ENCODE measurements at regions of chr3 and their contacts with region 1.

Region 1: GRCh38 chr3:51498876-51499738 is 708 bp downstream of the DCAF1 start:
- DNase-seq: peak; percentile 91
- H3K4me3 Mint-ChIP-seq: peak overlapping the region; percentile 98
- H3K27ac Mint-ChIP-seq: peak overlapping the region; percentile 98
- H3K4me1 Mint-ChIP-seq: peaks cover 21% of the 10 kb centered on the region
- H3K27me3 Mint-ChIP-seq: no peaks in the 10 kb centered on the region

Region 2: DNA sequence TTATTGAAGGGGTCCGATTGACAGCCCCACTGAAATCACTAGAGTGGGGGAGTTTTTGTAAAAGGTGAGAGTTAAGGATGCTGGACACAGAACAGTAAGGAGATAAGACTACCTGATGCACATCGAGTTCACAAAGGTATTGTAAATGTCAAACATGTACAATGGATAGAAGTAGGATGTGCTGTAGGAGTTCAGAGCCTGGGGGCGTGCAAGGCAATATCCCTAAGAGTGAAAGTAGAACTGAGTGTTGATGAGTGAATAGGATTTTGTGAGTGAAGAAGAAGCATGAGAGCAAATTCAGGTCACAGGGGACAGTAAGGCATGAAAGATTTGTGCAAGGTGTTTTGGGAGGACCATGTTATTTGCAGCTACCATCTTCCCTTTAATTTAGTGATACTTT is 802.8 kb before region 1 on chr3:
- CTCF ChIA-PET with region 1: no interaction called
- intact Hi-C with region 1: no loop called
- DNase-seq: no peak
- H3K4me3 Mint-ChIP-seq: no peak overlapping the region
- H3K27ac Mint-ChIP-seq: no peak overlapping the region
- H3K4me1 Mint-ChIP-seq: no peaks in the 10 kb centered on the region
- H3K27me3 Mint-ChIP-seq: no peaks in the 10 kb centered on the region

Region 3: DNA sequence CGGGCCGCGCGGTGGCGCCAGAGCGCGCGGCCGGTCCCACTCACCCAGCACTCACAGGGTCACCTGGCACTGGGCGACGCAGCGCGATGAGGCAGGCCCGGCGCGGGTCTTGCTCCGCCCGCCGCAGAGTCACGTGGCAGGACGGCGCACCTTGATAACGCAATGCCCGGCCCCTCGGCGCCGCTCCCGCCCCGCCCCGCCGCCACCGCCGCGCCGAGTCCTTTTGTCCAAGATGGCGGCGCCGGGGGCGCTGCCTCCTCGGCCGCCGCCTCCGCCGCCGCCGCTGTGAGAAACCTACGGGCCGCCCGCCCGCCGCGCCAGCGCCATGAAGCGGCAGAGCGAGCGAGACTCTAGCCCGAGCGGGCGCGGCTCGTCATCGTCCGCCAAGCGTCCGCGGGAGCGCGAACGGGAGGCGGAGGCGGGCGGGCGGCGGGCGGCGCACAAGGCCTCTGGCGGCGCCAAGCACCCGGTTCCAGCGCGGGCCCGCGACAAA is 108.0 kb before region 1 on chr3 and contains the start of gene RBM15B:
- CTCF ChIA-PET with region 1: interaction called, 7 read pairs
- intact Hi-C with region 1: loop called (anchors 1 kb)
- DNase-seq: peak; percentile 98
- H3K4me3 Mint-ChIP-seq: peak within 1 kb of the TSS; percentile 81
- H3K27ac Mint-ChIP-seq: peak within 1 kb of the TSS; percentile 85
- H3K4me1 Mint-ChIP-seq: peaks cover 77% of the 10 kb centered on the region
- H3K27me3 Mint-ChIP-seq: no peaks in the 10 kb centered on the region
- total RNA-seq, gene RBM15B: 12.8 to 13.5 TPM

Region 4: GRCh38 chr3:51637941-51638471 is 138.9 kb after region 1 on chr3:
- CTCF ChIA-PET with region 1: interaction called, 11 read pairs
- intact Hi-C with region 1: loop called (anchors 1 kb)
- DNase-seq: peak; percentile 50
- H3K4me3 Mint-ChIP-seq: no peak overlapping the region
- H3K27ac Mint-ChIP-seq: no peak overlapping the region
- H3K4me1 Mint-ChIP-seq: no peaks in the 10 kb centered on the region
- H3K27me3 Mint-ChIP-seq: no peaks in the 10 kb centered on the region

Region 5: DNA sequence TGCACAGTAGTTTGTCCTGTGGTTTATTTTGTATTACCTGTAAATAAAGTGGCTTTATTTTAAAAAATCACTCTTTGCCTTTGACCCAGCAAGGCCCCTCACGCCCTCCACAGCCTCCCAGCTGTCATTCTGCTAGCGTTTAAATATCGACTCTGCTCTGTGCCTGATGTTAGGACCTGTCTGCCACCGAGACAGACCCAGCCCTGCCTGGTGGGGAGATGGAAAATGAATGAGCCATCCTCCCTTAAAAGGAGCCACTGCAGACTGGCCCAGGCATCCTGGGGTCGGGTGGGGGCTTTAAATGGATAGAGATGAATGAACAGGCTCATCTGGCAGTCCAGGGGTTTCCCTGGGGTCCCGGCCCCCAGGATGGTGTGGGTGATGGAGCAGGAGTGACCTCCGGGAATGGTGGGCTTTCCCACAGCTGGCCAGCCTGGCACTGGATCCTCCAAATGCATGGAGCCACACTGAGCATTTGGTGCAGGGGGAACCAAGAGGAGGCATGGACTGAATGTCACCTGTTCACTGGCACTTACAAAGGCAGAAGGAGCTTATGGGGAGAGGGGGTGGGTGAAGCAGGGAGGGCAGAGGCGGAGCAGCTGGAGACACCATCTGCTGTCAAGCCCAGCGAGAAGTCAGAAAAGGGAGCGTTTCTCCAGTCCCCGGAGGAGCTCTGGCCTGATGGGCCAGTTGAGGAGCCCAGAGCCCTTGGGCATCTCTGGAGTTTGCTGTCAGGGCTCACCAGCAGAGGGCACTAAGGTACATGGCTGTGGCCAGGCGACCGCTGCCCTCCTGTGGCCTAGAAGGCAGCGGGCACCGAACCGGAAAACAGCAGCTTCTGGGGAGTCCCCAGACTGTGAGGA is 219.7 kb after region 1 on chr3:
- CTCF ChIA-PET with region 1: interaction called, 7 read pairs
- intact Hi-C with region 1: loop called (anchors 1 kb)
- DNase-seq: peak; percentile 87
- H3K4me3 Mint-ChIP-seq: no peak overlapping the region
- H3K27ac Mint-ChIP-seq: no peak overlapping the region
- H3K4me1 Mint-ChIP-seq: peaks cover 27% of the 10 kb centered on the region
- H3K27me3 Mint-ChIP-seq: no peaks in the 10 kb centered on the region

Region 6: GRCh38 chr3:51974963-51975851 is 476.1 kb after region 1 on chr3 and contains the start of gene ABHD14A:
- CTCF ChIA-PET with region 1: no interaction called
- intact Hi-C with region 1: loop called (anchors 5 kb)
- DNase-seq: peak; percentile 70
- H3K4me3 Mint-ChIP-seq: peak within 1 kb of the TSS; percentile 99
- H3K27ac Mint-ChIP-seq: peak within 1 kb of the TSS; percentile 97
- H3K4me1 Mint-ChIP-seq: peaks cover 37% of the 10 kb centered on the region
- H3K27me3 Mint-ChIP-seq: no peaks in the 10 kb centered on the region
- total RNA-seq, gene ABHD14A: 5.4 to 5.7 TPM